ENCODE measurements at regions of chr22 and their contacts with region 1.

Region 1: DNA sequence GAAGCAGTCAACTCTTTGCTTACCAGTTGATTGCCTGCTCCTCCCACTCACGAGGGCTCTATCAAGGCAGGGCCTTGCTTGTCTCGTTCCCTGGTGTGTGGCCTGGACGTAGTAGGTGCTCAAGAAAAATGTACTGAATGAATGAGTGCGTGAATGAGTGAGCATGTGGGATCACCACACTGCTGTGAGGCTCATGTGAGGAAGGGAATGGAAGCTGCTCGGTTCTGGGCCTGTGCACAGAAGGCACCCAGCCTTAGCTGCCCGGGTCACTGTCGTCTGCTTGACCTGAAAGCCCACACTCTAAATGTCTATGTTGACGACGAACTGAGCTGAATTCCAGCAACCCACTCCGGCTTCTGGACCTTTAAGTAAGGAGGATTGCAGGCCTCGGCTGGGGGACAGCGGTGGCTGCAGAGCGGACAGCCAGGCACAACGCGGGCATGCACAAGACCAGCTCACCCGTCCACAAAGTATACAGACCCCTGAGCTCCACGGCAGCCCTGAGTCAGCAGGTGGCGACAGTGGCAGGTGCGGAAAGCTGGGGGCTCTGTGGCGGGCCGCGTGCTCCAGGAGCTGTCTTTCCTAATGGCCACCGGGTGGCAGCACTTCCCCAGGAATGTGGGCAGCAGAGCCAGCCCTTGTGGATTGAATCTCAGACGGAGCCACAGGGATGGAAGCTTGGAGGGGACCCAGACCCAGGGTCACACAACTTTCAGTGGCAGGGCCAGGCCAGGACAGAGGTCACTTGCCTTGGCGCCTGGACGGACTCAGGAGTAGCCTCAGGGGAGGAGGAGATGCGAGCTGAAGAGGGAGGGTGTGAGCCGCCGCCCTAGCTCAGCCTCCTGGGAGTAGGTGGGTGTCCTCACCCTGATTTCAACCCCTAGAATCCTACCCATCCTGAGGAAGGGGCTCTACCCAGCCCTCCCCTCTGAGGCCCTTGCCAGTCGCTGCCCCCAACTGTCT is 5.0 kb upstream of the PICK1 start:
- DNase-seq: no peak
- H3K4me3 ChIP-seq: no peak overlapping the region
- H3K27ac ChIP-seq: no peak overlapping the region
- H3K4me1 ChIP-seq: peaks cover 0 to 17% (median 6%) of the 10 kb centered on the region in 3 donors
- H3K27me3 ChIP-seq: no peaks in the 10 kb centered on the region
- CTCF ChIP-seq: peak; percentile 79 to 92 (median 90)
- POLR2A ChIP-seq: no peak

Region 2: DNA sequence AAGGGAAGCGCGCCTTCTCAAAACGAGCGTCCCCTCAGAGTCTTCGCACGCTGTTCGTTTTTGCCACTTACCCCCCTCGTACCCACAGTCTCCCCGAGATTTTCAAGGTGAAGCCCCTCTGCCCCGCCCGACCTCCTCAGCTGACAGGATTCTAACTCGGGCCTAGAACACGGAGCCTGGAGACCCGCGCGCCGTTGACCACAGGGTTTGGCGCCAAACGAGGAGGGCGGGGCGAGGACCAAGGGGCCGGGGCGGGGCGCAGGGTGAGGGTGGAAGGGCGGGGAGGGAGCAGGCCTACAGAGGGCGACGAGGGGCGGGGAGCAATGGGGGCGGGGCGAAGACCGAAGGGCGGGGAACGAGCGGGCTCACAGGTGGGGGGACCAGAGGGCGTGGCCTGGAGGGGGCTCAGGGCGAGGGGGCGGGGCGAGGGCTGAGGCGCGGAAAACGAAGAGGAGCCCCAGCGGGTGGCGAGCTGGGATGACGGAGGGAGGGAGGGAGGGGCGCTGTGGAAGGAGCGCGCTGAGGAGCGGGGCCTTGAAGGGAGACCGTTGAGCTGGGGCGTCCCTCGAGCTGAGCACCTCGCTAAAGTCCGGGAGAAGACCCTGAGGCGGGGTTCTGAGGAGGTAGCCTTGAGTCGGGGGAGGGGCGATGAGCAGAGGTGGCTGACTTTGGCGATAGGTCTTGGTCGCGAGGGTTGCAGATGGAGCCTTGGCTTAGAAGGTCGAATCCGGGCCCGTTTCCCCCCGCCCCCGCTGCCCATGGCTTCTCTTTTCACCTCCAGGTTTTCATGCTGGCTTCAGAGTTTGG is 518.0 kb after region 1 on chr22 and contains the start of gene DMC1:
- intact Hi-C with region 1: loop called (anchors 10 kb)
- DNase-seq: peak; percentile 55
- H3K4me3 ChIP-seq: peak within 1 kb of the TSS; percentile 40 to 83 (median 65)
- H3K27ac ChIP-seq: peak within 1 kb of the TSS; percentile 56 to 90 (median 85)
- H3K4me1 ChIP-seq: peaks cover 0 to 22% (median 13%) of the 10 kb centered on the region in 3 donors
- H3K27me3 ChIP-seq: no peaks in the 10 kb centered on the region
- CTCF ChIP-seq: no peak
- POLR2A ChIP-seq: peak in 1 of 4 donors; percentile 49
- total RNA-seq, gene DMC1: 1.1 to 7.2 (median 5.2) TPM in 3 of 4 donors, not detected in the other